ENCODE measurements at regions of chr10 and their contacts with region 1.

Region 1: GRCh38 chr10:32104622-32105509 is 48.6 kb upstream of the KIF5B start:
- DNase-seq: no peak
- H3K4me3 Mint-ChIP-seq: no peak overlapping the region
- H3K27ac Mint-ChIP-seq: no peak overlapping the region
- H3K4me1 Mint-ChIP-seq: no peaks in the 10 kb centered on the region
- H3K27me3 Mint-ChIP-seq: peaks cover 4% of the 10 kb centered on the region

Region 2: DNA sequence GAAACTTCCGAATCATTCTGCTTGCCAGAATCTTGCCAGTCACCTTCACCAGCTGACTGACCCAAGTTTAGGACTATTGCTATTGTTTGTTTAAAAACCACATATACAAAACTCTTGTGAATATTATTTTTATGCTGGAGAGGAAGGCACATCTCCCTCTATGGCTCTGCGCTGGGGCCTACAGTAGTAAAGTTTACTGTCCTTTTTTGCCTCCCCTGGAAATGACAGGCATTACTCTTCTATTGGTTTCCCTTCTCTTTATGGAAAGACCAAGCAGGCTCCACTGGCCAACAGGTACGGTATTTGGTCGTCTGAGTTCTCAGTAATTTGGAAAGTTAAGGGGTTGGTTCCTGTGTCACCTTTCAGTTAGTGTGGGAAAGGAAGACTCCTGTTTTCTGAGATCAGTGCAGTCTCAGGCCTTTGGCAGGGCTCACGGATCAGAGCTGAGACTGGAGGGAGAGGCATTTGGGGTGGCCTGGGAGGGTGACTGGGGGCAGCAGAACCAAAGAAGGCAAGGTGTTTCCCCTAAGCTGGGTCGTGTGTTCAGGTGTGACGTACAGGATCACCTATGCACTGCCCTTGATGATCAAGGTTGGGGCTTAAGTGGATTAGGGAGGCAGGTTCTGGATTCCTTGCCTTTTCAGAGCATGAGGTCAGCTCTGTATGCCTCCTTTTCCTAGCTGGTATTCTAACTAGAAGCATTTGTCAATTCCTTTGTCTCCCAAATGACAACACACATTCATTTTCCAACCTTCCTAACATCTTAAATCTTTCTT is 32.7 kb before region 1 on chr10:
- CTCF ChIA-PET with region 1: interaction called, 3 read pairs
- POLR2A ChIA-PET with region 1: no interaction called
- intact Hi-C with region 1: loop called (anchors 1 kb)
- DNase-seq: no peak
- H3K4me3 Mint-ChIP-seq: no peak overlapping the region
- H3K27ac Mint-ChIP-seq: no peak overlapping the region
- H3K4me1 Mint-ChIP-seq: no peaks in the 10 kb centered on the region
- H3K27me3 Mint-ChIP-seq: peaks cover 4% of the 10 kb centered on the region